ENCODE measurements at regions of chr3 and their contacts with region 1.

Region 1: GRCh38 chr3:113495035-113495434 is 19.9 kb downstream of the SPICE1 start:
- DNase-seq: no peak
- ATAC-seq: peak; percentile 76

Region 2: GRCh38 chr3:113211330-113212149 is 283.5 kb before region 1 on chr3 and contains the start of gene BOC:
- intact Hi-C with region 1: no loop called
- DNase-seq: no peak
- ATAC-seq: peak; percentile 87
- total RNA-seq, gene BOC: 7.4 TPM

Region 3: DNA sequence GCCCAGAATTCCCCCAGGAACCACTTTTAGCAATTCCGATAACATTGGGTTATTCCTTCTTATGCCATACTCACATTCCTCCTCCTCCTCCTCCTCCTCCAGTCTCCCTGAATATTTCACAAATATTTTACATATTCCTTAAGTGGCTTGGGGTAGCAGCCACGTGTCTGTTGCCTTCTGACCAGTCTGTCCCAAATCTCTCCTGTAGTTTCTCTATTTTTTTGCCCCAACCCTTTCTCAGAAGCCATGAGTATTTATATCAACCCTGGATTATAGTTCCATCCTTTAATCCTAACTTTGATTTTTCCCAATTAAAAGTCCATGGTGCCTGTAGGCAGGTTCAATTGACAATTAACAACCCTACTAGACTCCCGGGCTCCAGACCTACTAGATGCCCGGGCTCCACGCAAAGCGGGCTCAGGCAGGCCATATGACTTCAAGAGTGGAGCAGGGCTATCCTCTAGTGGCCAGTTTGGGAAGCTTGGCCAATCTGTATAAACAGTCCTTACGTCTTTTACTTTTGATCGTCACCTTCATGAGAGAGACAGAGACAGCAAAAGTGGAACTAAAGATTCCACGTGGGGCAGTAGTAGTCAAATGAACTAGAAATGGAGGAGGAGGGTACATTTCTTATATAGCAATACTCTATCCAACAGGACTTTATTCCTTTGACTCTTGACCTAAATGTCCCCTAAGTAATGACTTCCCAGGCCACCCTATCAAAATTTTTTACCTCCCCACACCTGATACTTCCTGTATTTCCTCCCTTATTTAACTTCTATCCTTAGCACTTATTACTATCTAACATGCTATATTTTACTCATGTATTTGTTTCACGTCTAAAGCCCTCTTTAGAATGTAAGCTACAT is 131.7 kb after region 1 on chr3:
- intact Hi-C with region 1: loop called (anchors 5 kb)
- DNase-seq: peak; percentile 62
- ATAC-seq: peak; percentile 96

Measured in Right ventricle myocardium superior (tissue), 1 donor.